ENCODE measurements at regions of chr6 and their contacts with region 1.

Region 1: GRCh38 chr6:36615018-36615761 is 21.0 kb downstream of the SRSF3 start:
- DNase-seq: peak; percentile 47
- H3K4me3 Mint-ChIP-seq: no peak overlapping the region
- H3K27ac Mint-ChIP-seq: no peak overlapping the region
- H3K4me1 Mint-ChIP-seq: peaks cover 24% of the 10 kb centered on the region
- H3K27me3 Mint-ChIP-seq: no peaks in the 10 kb centered on the region

Region 2: DNA sequence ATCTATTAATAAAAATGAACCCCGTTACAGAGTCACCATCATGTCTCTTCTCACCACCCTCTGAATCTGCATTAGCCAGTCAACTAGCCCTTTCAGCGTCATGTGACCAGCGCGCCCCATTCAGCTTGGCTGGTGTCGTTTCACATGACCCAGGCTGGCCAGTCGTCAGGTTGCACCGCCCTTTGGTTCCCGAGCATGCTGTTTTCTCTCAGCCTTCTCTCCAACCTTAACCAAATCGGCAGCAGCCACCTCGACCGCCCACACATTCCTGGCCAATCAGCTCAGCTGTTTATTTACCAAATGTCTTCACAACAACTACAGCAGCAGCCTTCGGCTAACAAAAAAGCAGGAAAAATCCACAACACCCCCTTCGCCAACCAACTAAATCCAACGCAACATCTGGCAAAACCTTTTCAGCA is 15.4 kb before region 1 on chr6:
- CTCF ChIA-PET with region 1: interaction called, 25 read pairs
- POLR2A ChIA-PET with region 1: no interaction called
- DNase-seq: peak; percentile 72
- H3K4me3 Mint-ChIP-seq: peak overlapping the region; percentile 98
- H3K27ac Mint-ChIP-seq: peak overlapping the region; percentile 82
- H3K4me1 Mint-ChIP-seq: peaks cover 67% of the 10 kb centered on the region
- H3K27me3 Mint-ChIP-seq: no peaks in the 10 kb centered on the region

Region 3: GRCh38 chr6:36638579-36638978 is 23.4 kb after region 1 on chr6:
- CTCF ChIA-PET with region 1: no interaction called
- POLR2A ChIA-PET with region 1: no interaction called
- DNase-seq: no peak
- H3K4me3 Mint-ChIP-seq: no peak overlapping the region
- H3K27ac Mint-ChIP-seq: no peak overlapping the region
- H3K4me1 Mint-ChIP-seq: no peaks in the 10 kb centered on the region
- H3K27me3 Mint-ChIP-seq: peaks cover 2% of the 10 kb centered on the region

Region 4: DNA sequence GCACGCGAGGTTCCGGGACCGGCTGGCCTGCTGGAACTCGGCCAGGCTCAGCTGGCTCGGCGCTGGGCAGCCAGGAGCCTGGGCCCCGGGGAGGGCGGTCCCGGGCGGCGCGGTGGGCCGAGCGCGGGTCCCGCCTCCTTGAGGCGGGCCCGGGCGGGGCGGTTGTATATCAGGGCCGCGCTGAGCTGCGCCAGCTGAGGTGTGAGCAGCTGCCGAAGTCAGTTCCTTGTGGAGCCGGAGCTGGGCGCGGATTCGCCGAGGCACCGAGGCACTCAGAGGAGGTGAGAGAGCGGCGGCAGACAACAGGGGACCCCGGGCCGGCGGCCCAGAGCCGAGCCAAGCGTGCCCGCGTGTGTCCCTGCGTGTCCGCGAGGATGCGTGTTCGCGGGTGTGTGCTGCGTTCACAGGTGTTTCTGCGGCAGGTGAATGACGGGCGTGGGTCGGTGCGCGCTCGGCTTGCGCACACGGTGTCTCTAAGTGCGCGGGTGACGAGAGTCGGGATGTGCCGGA is 63.4 kb after region 1 on chr6 and contains the start of gene CDKN1A:
- CTCF ChIA-PET with region 1: interaction called, 10 read pairs
- POLR2A ChIA-PET with region 1: no interaction called
- DNase-seq: peak; percentile 76
- H3K4me3 Mint-ChIP-seq: peak within 1 kb of the TSS; percentile 96
- H3K27ac Mint-ChIP-seq: peak within 1 kb of the TSS; percentile 90
- H3K4me1 Mint-ChIP-seq: peaks cover 60% of the 10 kb centered on the region
- H3K27me3 Mint-ChIP-seq: peaks cover 15% of the 10 kb centered on the region
- total RNA-seq, gene CDKN1A: 36.7 to 39.5 TPM

Region 5: DNA sequence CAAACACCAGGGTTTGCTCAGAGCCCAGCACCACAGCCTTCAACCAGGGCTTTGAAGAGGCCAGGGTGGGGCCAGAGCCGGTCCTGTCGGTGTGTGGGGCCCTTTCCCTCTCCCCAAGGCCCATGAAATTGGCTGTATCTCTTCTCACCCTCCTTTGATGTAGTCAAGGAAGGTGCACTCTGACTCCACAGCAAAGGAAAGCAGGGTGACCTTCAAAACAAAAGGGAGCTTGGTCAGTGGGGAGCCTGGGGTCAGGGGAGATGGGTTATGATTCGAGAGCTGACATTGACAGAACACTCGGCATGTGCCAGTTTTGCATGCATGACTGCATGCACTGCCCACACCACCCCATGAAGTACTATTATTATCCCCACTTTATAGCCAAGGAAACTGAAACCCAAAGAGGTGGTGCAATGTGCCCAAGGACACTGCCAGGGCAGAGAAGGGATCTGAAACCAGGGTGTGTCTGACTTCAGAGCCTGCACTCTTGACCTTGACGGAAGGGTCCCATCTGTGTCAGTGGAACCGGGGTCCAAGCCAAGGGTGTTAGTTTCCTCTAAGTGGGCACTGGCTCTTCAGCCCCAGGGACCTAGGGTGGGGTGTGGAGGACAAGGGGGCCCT is 137.8 kb after region 1 on chr6:
- CTCF ChIA-PET with region 1: interaction called, 31 read pairs
- POLR2A ChIA-PET with region 1: no interaction called
- DNase-seq: no peak
- H3K4me3 Mint-ChIP-seq: no peak overlapping the region
- H3K27ac Mint-ChIP-seq: peak overlapping the region; percentile 76
- H3K4me1 Mint-ChIP-seq: peaks cover 62% of the 10 kb centered on the region
- H3K27me3 Mint-ChIP-seq: no peaks in the 10 kb centered on the region

Region 6: GRCh38 chr6:36759148-36759759 is 144.1 kb after region 1 on chr6:
- CTCF ChIA-PET with region 1: interaction called, 31 read pairs
- POLR2A ChIA-PET with region 1: no interaction called
- DNase-seq: peak; percentile 79
- H3K4me3 Mint-ChIP-seq: no peak overlapping the region
- H3K27ac Mint-ChIP-seq: no peak overlapping the region
- H3K4me1 Mint-ChIP-seq: peaks cover 43% of the 10 kb centered on the region
- H3K27me3 Mint-ChIP-seq: no peaks in the 10 kb centered on the region

Region 7: DNA sequence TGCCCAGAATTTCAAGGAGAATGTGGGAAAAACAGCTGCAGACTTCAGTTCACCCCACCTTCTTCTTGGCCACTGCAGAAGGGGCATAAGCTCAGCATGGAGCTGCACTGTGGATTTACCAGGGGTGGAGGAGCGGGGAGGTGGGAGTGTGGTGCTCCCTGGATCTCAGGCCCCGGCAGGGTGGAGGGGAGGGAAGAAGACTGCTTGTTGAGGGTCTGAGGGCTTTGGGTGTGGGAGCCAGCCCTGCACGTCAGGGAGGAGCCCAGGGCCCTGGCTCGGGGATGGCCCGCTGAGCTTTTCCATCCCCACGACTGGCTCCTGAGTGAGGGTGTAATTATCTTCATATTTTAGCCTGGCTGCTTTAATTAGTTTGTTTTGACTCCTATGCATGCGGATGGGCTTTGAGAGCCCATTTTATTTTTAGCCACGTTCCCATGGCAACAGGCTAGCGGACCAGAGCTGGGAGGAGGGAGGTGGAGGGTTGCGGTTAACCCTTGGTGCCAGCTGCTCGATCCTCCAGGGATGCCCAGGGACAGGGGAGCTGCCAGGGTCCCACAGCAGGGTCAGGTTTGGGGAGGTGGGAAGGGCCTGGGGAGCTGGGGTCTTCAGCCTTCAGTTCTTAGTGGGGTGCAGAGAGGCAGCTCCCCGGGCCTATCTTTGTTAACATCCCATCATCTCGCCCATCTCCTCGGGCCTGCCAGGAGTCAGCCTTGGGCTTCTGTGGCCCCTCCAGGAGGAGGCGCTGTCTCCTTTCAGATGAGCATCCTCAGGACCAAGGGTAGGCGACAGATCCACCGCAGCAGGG is 150.6 kb after region 1 on chr6:
- CTCF ChIA-PET with region 1: interaction called, 12 read pairs
- POLR2A ChIA-PET with region 1: interaction called, 3 read pairs
- DNase-seq: peak; percentile 89
- H3K4me3 Mint-ChIP-seq: no peak overlapping the region
- H3K27ac Mint-ChIP-seq: no peak overlapping the region
- H3K4me1 Mint-ChIP-seq: peaks cover 42% of the 10 kb centered on the region
- H3K27me3 Mint-ChIP-seq: no peaks in the 10 kb centered on the region

Region 8: DNA sequence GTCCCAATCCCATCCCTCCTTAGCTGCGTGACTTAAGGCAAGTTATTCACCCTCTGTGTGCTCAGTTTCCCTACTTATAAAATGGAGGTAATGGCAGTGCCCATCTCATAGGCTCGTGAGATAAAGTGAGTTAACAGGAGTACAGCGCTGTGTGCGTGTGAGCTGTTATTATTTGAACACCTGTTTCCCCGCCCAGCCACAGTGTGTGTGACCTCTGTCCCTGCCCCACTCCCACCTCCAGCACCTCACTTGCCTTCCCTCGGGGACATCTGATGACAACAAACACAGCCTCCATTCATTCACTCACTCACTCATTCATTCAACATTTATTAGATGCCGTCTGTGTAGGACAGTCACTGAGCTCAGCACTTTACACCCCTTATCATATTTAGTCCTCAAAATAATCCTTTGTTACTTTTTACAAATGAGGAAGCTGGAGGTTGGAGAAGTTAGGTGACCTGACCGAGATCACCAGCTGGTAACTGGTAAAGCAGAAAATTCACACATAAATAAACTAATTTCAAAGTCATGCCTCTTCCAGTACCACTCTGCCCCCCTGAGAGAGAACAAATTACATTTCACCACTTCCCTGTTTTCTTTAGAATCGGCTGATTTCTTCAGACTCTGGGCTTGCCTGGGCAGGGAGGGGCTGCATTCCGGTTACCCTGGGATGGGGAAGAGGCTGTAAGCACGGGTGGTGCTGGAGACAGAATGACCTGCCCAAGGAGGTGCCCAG is 165.4 kb after region 1 on chr6:
- CTCF ChIA-PET with region 1: interaction called, 10 read pairs
- POLR2A ChIA-PET with region 1: interaction called, 3 read pairs
- DNase-seq: no peak
- H3K4me3 Mint-ChIP-seq: no peak overlapping the region
- H3K27ac Mint-ChIP-seq: no peak overlapping the region
- H3K4me1 Mint-ChIP-seq: peaks cover 12% of the 10 kb centered on the region
- H3K27me3 Mint-ChIP-seq: peaks cover 11% of the 10 kb centered on the region

Measured in activated CD4-positive, alpha-beta T cell treated with anti-CD3 and anti-CD28 coated beads, Interleukin-2, amount 10 ng/mL, durations not matched to agents 7 days and 5 days (primary cell).